Panc1 (cell line): ENCODE measurements at regions of chr12 and their contacts with region 1.

Region 1: GRCh38 chr12:109087250-109087649 is 6.0 kb downstream of the ALKBH2 start:
- DNase-seq: no peak
- ATAC-seq: no peak
- H3K4me3 ChIP-seq: no peak overlapping the region
- H3K27ac ChIP-seq: no peak overlapping the region
- H3K4me1 ChIP-seq: peaks cover 11% of the 10 kb centered on the region
- H3K27me3 ChIP-seq: no peaks in the 10 kb centered on the region
- CTCF ChIP-seq: no peak

Region 2: GRCh38 chr12:108884116-108885012 is 202.9 kb before region 1 on chr12:
- CTCF ChIA-PET with region 1: no interaction called
- POLR2A ChIA-PET with region 1: no interaction called
- in situ Hi-C with region 1: no loop called
- intact Hi-C with region 1: loop called (anchors 10 kb)
- DNase-seq: peak; percentile 12
- ATAC-seq: peak; percentile 72
- H3K4me3 ChIP-seq: no peak overlapping the region
- H3K27ac ChIP-seq: no peak overlapping the region
- H3K4me1 ChIP-seq: no peaks in the 10 kb centered on the region
- H3K27me3 ChIP-seq: no peaks in the 10 kb centered on the region
- CTCF ChIP-seq: peak; percentile 85

Region 3: DNA sequence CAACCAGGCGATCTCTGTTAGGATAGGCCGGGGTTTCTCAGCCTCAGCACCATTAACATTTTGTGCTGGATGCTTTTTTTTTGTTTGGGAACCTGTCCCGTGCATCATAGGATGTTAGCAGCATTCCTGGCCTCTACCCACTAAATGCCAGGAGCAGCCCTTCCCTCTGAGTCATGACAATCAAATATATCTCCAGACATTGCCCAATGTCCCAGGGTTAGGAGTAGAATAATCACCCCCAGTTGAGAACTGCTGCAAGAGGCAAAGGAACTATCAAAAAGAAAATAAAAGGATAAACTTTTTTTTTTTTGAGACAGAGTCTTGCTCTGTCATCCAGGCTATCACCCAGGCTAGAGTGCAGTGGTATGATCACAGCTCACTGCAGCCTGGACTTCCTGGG is 105.1 kb after region 1 on chr12:
- CTCF ChIA-PET with region 1: no interaction called
- POLR2A ChIA-PET with region 1: no interaction called
- in situ Hi-C with region 1: no loop called
- intact Hi-C with region 1: no loop called
- DNase-seq: no peak
- ATAC-seq: no peak
- H3K4me3 ChIP-seq: no peak overlapping the region
- H3K27ac ChIP-seq: no peak overlapping the region
- H3K4me1 ChIP-seq: no peaks in the 10 kb centered on the region
- H3K27me3 ChIP-seq: no peaks in the 10 kb centered on the region
- CTCF ChIP-seq: no peak